ENCODE measurements at regions of chr11 and their contacts with region 1.

Region 1: DNA sequence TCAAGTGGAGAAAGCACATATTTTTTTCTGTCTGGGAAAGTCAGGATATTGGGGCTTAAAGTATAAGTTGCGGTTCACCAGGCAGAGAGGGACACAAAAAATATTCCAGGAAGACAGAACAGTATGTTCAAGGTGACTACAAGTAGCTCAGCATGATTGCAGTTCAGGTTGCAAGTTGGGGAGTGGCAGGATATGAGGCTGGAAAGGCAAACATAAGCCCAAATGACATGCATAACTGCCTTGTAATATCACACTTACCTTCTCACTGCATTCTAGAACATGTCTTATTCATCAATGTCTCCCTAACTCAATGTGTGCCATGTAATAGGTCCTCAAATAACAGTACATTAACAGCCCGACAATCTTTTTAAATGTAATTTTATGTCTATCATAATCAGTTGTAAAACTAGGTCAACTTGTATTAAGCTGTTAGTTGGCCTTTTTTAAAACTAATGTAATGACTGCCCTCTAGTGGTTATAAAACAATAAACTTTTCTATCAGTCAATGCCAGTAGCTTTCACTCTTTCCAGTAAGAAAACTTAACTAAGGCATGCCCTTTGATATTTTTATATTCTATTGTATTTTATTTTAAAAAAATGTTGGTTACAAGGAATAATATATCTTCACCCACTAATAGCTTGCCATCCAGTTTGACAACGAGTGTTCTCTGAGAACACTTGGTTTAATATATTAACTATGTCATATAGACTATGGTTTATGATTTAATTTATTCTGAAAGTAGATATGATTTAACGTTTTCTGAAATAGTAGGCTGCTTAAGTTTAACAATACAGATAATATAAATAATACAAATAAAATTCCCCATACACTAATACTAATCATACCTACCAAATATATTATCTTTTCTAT is 39.4 kb upstream of the CFAP300 start:
- DNase-seq: no peak
- H3K4me3 ChIP-seq: no peak overlapping the region
- H3K27ac ChIP-seq: no peak overlapping the region
- H3K4me1 ChIP-seq: no peaks in the 10 kb centered on the region
- H3K27me3 ChIP-seq: no peaks in the 10 kb centered on the region
- CTCF ChIP-seq: peak in 2 of 3 experiments; percentile 22 to 74
- POLR2A ChIP-seq: no peak

Region 2: DNA sequence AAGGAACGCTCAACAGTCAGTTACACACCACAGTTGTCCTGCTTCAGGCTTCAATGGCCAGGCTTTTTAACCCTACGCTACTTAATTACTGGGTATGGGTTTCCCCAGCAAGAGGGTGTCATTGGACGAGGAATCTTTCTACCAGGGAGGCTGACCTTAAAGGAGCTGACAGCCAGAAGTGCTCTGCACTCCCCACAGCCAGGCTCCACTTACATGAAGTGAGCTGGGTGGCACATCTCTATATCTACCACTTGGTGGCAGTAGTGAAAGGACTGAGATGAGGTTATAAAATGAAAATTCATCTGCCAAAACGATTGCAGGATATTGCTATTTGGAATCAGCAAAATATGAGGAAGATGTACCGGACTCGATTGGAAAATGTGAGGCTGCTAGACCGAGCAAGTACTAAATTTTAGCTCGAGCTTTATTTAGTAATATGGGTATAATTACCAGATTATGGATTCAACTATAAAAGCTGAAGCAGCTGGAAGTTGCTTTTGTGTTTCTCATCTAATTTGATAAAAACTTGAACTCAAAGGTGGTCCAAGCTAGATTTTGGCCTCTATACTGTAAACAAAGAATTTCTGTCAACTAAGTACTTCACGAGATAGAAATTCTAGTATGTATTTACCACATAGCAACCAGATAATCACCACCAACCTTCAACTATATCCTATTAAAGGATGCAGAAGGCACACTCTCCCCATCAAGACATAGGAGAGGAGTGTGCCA is 146.9 kb before region 1 on chr11:
- intact Hi-C with region 1: loop called (anchors 10 kb)
- DNase-seq: peak; percentile 50
- H3K4me3 ChIP-seq: no peak overlapping the region
- H3K27ac ChIP-seq: no peak overlapping the region
- H3K4me1 ChIP-seq: peaks cover 9% of the 10 kb centered on the region
- H3K27me3 ChIP-seq: no peaks in the 10 kb centered on the region
- CTCF ChIP-seq: peak; percentile 41 to 64 (median 57)
- POLR2A ChIP-seq: no peak

Measured in testis (tissue), 5 donors.